ENCODE measurements at regions of chr10 and their contacts with region 1.

Region 1: GRCh38 chr10:103888113-103888841 is 29.7 kb downstream of the STN1 start:
- DNase-seq: peak; percentile 33
- H3K4me3 Mint-ChIP-seq: no peak overlapping the region
- H3K27ac Mint-ChIP-seq: peak overlapping the region; percentile 80
- H3K4me1 Mint-ChIP-seq: peaks cover 46% of the 10 kb centered on the region
- H3K27me3 Mint-ChIP-seq: no peaks in the 10 kb centered on the region

Region 2: DNA sequence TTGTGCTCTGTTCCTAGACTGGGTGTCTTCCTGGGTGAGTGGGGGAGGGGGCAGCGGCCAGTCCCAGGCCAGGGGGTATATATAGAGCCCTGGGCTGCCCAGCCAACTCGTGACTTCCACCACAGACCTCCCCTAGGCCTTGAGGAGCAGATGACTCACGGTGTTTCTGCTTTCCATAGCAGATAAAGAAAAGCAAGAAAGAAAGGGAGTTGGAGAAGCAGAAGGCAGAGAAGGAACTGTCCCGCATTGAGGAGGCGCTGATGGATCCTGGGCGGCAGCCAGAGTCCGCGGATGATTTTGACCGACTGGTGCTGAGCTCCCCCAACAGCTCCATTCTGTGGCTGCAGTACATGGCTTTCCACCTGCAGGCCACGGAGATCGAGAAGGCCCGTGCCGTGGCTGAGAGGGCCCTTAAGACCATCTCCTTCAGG is 446.2 kb before region 1 on chr10:
- CTCF ChIA-PET with region 1: no interaction called
- POLR2A ChIA-PET with region 1: no interaction called
- intact Hi-C with region 1: no loop called
- DNase-seq: no peak
- H3K4me3 Mint-ChIP-seq: no peak overlapping the region
- H3K27ac Mint-ChIP-seq: no peak overlapping the region
- H3K4me1 Mint-ChIP-seq: peaks cover 3% of the 10 kb centered on the region
- H3K27me3 Mint-ChIP-seq: no peaks in the 10 kb centered on the region

Region 3: GRCh38 chr10:103911021-103911459 is 22.8 kb after region 1 on chr10:
- CTCF ChIA-PET with region 1: interaction called, 6 read pairs
- POLR2A ChIA-PET with region 1: interaction called, 4 read pairs
- intact Hi-C with region 1: loop called (anchors 1 kb)
- DNase-seq: peak; percentile 60
- H3K4me3 Mint-ChIP-seq: peak overlapping the region; percentile 52
- H3K27ac Mint-ChIP-seq: peak overlapping the region; percentile 99
- H3K4me1 Mint-ChIP-seq: peaks cover 71% of the 10 kb centered on the region
- H3K27me3 Mint-ChIP-seq: no peaks in the 10 kb centered on the region

Region 4: GRCh38 chr10:103966671-103967447 is 78.6 kb after region 1 on chr10 and contains the start of gene SLK:
- CTCF ChIA-PET with region 1: interaction called, 6 read pairs
- POLR2A ChIA-PET with region 1: no interaction called
- intact Hi-C with region 1: loop called (anchors 1 kb)
- DNase-seq: peak; percentile 86
- H3K4me3 Mint-ChIP-seq: peak within 1 kb of the TSS; percentile 94
- H3K27ac Mint-ChIP-seq: peak within 1 kb of the TSS; percentile 92
- H3K4me1 Mint-ChIP-seq: peaks cover 33% of the 10 kb centered on the region
- H3K27me3 Mint-ChIP-seq: no peaks in the 10 kb centered on the region
- total RNA-seq, gene SLK: 26.1 to 27.7 TPM

Region 5: DNA sequence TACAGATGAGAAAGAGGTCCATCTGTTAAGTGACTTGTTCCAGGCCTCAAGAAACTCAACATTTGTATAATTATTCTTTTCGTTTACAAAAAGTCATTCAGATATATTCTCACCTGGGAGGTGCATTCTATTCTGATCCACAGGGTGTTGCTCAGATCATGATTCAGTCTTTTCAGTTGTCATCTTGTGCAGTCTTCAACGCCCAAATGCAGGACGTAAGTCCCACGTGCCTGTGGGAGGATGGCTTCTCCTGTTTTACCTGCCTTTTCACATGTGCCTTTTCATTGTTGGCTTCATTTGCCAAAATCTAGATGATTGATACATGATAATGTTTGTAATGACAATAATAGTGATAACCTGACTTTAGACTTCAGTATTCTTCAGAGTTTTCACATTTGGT is 125.2 kb after region 1 on chr10:
- CTCF ChIA-PET with region 1: interaction called, 10 read pairs
- POLR2A ChIA-PET with region 1: no interaction called
- intact Hi-C with region 1: no loop called
- DNase-seq: no peak
- H3K4me3 Mint-ChIP-seq: no peak overlapping the region
- H3K27ac Mint-ChIP-seq: no peak overlapping the region
- H3K4me1 Mint-ChIP-seq: peaks cover 14% of the 10 kb centered on the region
- H3K27me3 Mint-ChIP-seq: no peaks in the 10 kb centered on the region

Region 6: GRCh38 chr10:104080762-104081161 is 192.5 kb after region 1 on chr10:
- CTCF ChIA-PET with region 1: interaction called, 30 read pairs
- POLR2A ChIA-PET with region 1: no interaction called
- intact Hi-C with region 1: loop called (anchors 1 kb)
- DNase-seq: peak; percentile 16
- H3K4me3 Mint-ChIP-seq: no peak overlapping the region
- H3K27ac Mint-ChIP-seq: no peak overlapping the region
- H3K4me1 Mint-ChIP-seq: no peaks in the 10 kb centered on the region
- H3K27me3 Mint-ChIP-seq: no peaks in the 10 kb centered on the region

Region 7: GRCh38 chr10:104274762-104275721 is 386.8 kb after region 1 on chr10:
- CTCF ChIA-PET with region 1: interaction called, 13 read pairs
- POLR2A ChIA-PET with region 1: no interaction called
- intact Hi-C with region 1: no loop called
- DNase-seq: peak; percentile 65
- H3K4me3 Mint-ChIP-seq: peak overlapping the region; percentile 26
- H3K27ac Mint-ChIP-seq: no peak overlapping the region
- H3K4me1 Mint-ChIP-seq: peaks cover 4% of the 10 kb centered on the region
- H3K27me3 Mint-ChIP-seq: peaks cover 7% of the 10 kb centered on the region

Measured in activated CD4-positive, alpha-beta memory T cell treated with anti-CD3 and anti-CD28 coated beads for 36 hours (primary cell).